ENCODE measurements at regions of chr13 and their contacts with region 1.

Region 1: GRCh38 chr13:112689303-112690165 is at the start of gene ATP11A:
- DNase-seq: peak; percentile 90
- H3K4me3 ChIP-seq: peak within 1 kb of the TSS; percentile 92 to 97 (median 96)
- H3K27ac ChIP-seq: peak within 1 kb of the TSS; percentile 49
- H3K4me1 ChIP-seq: peaks cover 14% of the 10 kb centered on the region
- H3K27me3 ChIP-seq: no peaks in the 10 kb centered on the region
- CTCF ChIP-seq: no peak
- POLR2A ChIP-seq: no peak
- total RNA-seq, gene ATP11A: 71.7 and 88.1 TPM in 2 replicates

Region 2: DNA sequence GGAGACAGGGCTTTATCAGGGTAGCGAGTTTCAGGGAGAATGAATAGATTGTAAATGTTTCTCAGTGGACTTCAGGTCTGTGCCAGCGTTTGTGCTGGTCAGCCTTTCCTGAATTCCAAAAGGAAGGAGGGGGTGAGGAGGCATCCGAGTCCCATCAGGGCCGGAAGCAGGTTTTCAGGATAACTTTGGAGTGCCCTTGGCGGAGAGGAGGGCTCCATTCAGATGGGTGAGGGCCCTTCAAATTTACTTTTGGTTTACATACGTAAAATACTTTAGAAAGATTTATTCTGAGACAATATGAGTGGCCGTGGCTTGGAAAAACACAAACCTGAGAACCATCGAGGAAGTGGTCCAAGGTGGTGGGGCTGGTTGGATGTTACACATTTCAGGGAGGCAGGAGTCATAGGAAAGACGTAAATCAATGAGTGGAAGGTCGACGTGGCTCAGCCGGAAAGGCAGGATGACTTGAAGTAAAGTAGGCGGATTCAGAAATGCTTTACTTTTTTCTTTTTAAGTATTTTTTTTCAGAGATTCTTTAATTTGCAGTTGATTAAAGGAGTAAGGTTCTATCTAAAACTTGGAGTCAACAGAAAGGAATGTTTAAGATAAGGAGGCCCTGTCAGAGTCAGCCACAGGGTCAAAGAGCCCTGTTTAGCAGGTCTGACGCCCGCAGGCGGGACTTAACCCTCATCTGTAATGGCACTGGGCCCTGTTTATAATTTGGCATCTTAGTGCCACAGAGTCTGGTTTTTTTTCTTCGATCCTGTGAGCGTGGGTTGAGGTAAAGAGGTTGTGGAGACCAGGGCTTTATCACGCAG is 33.1 kb after region 1 on chr13:
- CTCF ChIA-PET with region 1: no interaction called
- POLR2A ChIA-PET with region 1: no interaction called
- dilution Hi-C with region 1: no loop called
- intact Hi-C with region 1: loop called (anchors 1 kb)
- DNase-seq: peak; percentile 92
- H3K4me3 ChIP-seq: peak overlapping the region in 1 of 3 experiments; percentile 17
- H3K27ac ChIP-seq: peak overlapping the region; percentile 93
- H3K4me1 ChIP-seq: peaks cover 32% of the 10 kb centered on the region
- H3K27me3 ChIP-seq: no peaks in the 10 kb centered on the region
- CTCF ChIP-seq: no peak
- POLR2A ChIP-seq: no peak

Region 3: GRCh38 chr13:112748947-112749735 is 59.6 kb after region 1 on chr13:
- CTCF ChIA-PET with region 1: no interaction called
- POLR2A ChIA-PET with region 1: no interaction called
- dilution Hi-C with region 1: no loop called
- intact Hi-C with region 1: no loop called
- DNase-seq: no peak
- H3K4me3 ChIP-seq: no peak overlapping the region
- H3K27ac ChIP-seq: no peak overlapping the region
- H3K4me1 ChIP-seq: no peaks in the 10 kb centered on the region
- H3K27me3 ChIP-seq: no peaks in the 10 kb centered on the region
- CTCF ChIP-seq: no peak
- POLR2A ChIP-seq: no peak

Region 4: GRCh38 chr13:112783135-112783977 is 93.8 kb after region 1 on chr13:
- CTCF ChIA-PET with region 1: interaction called, 3 read pairs
- POLR2A ChIA-PET with region 1: no interaction called
- dilution Hi-C with region 1: no loop called
- intact Hi-C with region 1: loop called (anchors 5 kb)
- DNase-seq: no peak
- H3K4me3 ChIP-seq: no peak overlapping the region
- H3K27ac ChIP-seq: no peak overlapping the region
- H3K4me1 ChIP-seq: peaks cover 2% of the 10 kb centered on the region
- H3K27me3 ChIP-seq: no peaks in the 10 kb centered on the region
- CTCF ChIP-seq: no peak
- POLR2A ChIP-seq: no peak

Region 5: GRCh38 chr13:113216254-113217048 is 526.9 kb after region 1 on chr13:
- CTCF ChIA-PET with region 1: no interaction called
- POLR2A ChIA-PET with region 1: no interaction called
- dilution Hi-C with region 1: no loop called
- intact Hi-C with region 1: no loop called
- DNase-seq: peak; percentile 53
- H3K4me3 ChIP-seq: no peak overlapping the region
- H3K27ac ChIP-seq: no peak overlapping the region
- H3K4me1 ChIP-seq: peaks cover 3% of the 10 kb centered on the region
- H3K27me3 ChIP-seq: no peaks in the 10 kb centered on the region
- CTCF ChIP-seq: no peak
- POLR2A ChIP-seq: no peak